ENCODE measurements at regions of chr14 and their contacts with region 1.

Region 1: GRCh38 chr14:101731187-101732080 is 30.1 kb upstream of the PPP2R5C start:
- DNase-seq: peak; percentile 98
- ATAC-seq: peak; percentile 90
- H3K4me3 ChIP-seq: peak overlapping the region; percentile 52
- H3K27ac ChIP-seq: peak overlapping the region; percentile 99
- H3K4me1 ChIP-seq: peaks cover 44% of the 10 kb centered on the region
- H3K27me3 ChIP-seq: no peaks in the 10 kb centered on the region
- CTCF ChIP-seq: no peak

Region 2: DNA sequence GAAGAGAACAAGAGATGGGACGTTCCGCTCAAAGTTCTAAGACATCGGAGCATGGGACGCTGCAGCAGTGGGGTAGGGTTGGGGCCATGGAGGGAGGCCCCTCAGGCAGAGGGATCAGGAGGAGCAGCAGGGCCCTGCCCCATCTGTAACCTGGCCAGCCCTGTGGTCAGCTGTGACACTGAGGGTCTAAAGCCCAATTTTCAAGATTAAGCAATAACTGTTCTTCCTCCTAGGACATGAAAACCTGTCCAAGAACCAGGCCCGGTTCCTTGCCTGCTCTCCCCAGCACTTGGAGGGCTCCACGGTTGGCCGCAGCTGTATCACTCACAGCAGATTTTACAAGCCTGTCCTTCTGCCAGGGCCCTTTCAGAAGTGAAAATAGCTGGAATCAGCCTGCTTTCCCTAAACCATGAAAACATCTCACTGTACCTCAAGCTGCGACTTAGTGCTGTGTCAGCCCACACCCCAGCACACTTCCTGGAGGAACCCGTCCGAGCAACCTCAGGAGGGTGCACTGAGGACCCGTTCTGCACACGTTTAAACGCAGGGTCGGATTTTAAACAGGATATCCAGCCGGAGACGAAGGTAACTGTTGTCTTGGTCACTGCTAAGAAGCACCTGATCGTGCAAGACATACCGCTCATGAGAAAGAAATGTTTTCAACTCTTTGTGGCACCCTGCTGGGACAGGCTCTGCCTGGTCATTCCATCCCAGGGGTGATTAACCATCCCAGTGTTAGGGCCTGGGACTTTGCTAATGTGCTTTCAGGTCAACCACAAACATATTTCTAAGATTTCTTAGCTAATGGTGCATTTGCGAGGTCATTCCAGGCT is 372.0 kb before region 1 on chr14:
- CTCF ChIA-PET with region 1: no interaction called
- POLR2A ChIA-PET with region 1: no interaction called
- intact Hi-C with region 1: no loop called
- DNase-seq: no peak
- ATAC-seq: no peak
- H3K4me3 ChIP-seq: no peak overlapping the region
- H3K27ac ChIP-seq: no peak overlapping the region
- H3K4me1 ChIP-seq: no peaks in the 10 kb centered on the region
- H3K27me3 ChIP-seq: no peaks in the 10 kb centered on the region
- CTCF ChIP-seq: no peak

Region 3: GRCh38 chr14:101707068-101707842 is 24.2 kb before region 1 on chr14:
- CTCF ChIA-PET with region 1: interaction called, 3 read pairs
- POLR2A ChIA-PET with region 1: no interaction called
- intact Hi-C with region 1: loop called (anchors 1 kb)
- DNase-seq: peak; percentile 89
- ATAC-seq: peak; percentile 55
- H3K4me3 ChIP-seq: 0 out of 2 replicates have a peak overlapping the region, but pooled peaks have one; percentile 25
- H3K27ac ChIP-seq: peak overlapping the region; percentile 21
- H3K4me1 ChIP-seq: peaks cover 22% of the 10 kb centered on the region
- H3K27me3 ChIP-seq: no peaks in the 10 kb centered on the region
- CTCF ChIP-seq: peak; percentile 88

Region 4: DNA sequence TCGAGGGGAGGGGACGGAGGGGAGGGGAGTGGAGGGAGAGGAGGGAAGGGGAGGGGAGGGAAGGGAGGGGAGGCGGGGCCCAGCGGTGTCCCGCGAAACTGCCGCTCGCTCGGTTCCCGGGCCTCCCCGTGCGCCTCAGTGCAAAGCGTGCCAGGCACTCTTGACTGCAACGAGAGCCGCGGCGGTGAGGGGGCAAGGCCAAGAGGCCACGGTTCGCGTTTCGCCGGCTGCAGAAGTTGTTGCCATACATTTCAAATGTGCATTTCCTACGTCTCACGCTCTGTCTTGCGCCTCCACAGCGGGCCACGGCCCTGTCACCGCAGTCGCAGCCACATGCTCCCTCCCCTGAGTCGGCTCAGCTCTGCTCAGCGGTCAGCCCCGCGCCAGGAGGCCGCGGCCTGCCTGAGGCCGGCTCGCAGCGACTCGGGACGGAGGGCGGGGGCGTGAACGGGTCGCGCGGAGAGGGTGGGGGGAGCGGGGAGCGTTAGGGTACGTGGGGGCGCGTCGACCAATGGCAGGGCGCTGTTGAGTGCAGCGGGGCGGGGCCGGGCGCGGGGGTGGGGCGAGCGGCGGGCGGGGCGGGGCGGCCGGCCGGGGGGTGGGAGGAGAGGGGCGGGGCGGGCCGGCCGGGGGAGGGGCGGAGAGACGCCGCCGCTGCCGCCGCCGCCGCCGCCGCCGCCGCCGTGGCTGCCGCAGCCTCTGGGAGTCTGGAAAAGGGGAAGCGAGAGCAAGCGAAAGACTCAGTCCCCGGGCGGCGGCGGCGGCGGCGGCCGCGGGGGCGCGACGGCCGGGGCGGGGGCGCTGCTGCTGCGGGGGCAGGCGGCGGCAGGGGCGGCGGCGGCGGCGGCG is 29.8 kb after region 1 on chr14 and contains the start of gene PPP2R5C:
- CTCF ChIA-PET with region 1: interaction called, 3 read pairs
- POLR2A ChIA-PET with region 1: interaction called, 69 read pairs
- intact Hi-C with region 1: loop called (anchors 1 kb)
- DNase-seq: peak; percentile 75
- ATAC-seq: peak; percentile 75
- H3K4me3 ChIP-seq: peak within 1 kb of the TSS; percentile 98
- H3K27ac ChIP-seq: peak within 1 kb of the TSS; percentile 86
- H3K4me1 ChIP-seq: peaks cover 16% of the 10 kb centered on the region
- H3K27me3 ChIP-seq: no peaks in the 10 kb centered on the region
- CTCF ChIP-seq: no peak
- total RNA-seq, gene PPP2R5C: 92.9 and 96.1 TPM in 2 replicates

Region 5: GRCh38 chr14:101849125-101849524 is 117.7 kb after region 1 on chr14:
- CTCF ChIA-PET with region 1: no interaction called
- POLR2A ChIA-PET with region 1: no interaction called
- intact Hi-C with region 1: no loop called
- DNase-seq: no peak
- ATAC-seq: no peak
- H3K4me3 ChIP-seq: no peak overlapping the region
- H3K27ac ChIP-seq: no peak overlapping the region
- H3K4me1 ChIP-seq: no peaks in the 10 kb centered on the region
- H3K27me3 ChIP-seq: no peaks in the 10 kb centered on the region
- CTCF ChIP-seq: no peak

Region 6: GRCh38 chr14:101903111-101903561 is 171.7 kb after region 1 on chr14:
- CTCF ChIA-PET with region 1: no interaction called
- POLR2A ChIA-PET with region 1: no interaction called
- intact Hi-C with region 1: no loop called
- DNase-seq: no peak
- ATAC-seq: no peak
- H3K4me3 ChIP-seq: no peak overlapping the region
- H3K27ac ChIP-seq: no peak overlapping the region
- H3K4me1 ChIP-seq: no peaks in the 10 kb centered on the region
- H3K27me3 ChIP-seq: no peaks in the 10 kb centered on the region
- CTCF ChIP-seq: no peak